Endothelial cell of umbilical vein (primary cell): ENCODE measurements at regions of chr1 and their contacts with region 1.

Region 1: GRCh38 chr1:218705911-218706893 is 361.1 kb downstream of the TGFB2 start:
- DNase-seq: peak; percentile 74
- H3K4me3 ChIP-seq: no peak overlapping the region
- H3K27ac ChIP-seq: peak overlapping the region; percentile 86
- H3K4me1 ChIP-seq: peaks cover 26% of the 10 kb centered on the region
- H3K27me3 ChIP-seq: no peaks in the 10 kb centered on the region
- CTCF ChIP-seq: no peak
- POLR2A ChIP-seq: no peak

Region 2: GRCh38 chr1:218473522-218473921 is 232.7 kb before region 1 on chr1:
- CTCF ChIA-PET with region 1: no interaction called
- POLR2A ChIA-PET with region 1: no interaction called
- dilution Hi-C with region 1: no loop called
- intact Hi-C with region 1: no loop called
- DNase-seq: peak; percentile 79
- H3K4me3 ChIP-seq: no peak overlapping the region
- H3K27ac ChIP-seq: peak overlapping the region; percentile 74
- H3K4me1 ChIP-seq: peaks cover 28% of the 10 kb centered on the region
- H3K27me3 ChIP-seq: no peaks in the 10 kb centered on the region
- CTCF ChIP-seq: no peak
- POLR2A ChIP-seq: peak; percentile 46

Region 3: DNA sequence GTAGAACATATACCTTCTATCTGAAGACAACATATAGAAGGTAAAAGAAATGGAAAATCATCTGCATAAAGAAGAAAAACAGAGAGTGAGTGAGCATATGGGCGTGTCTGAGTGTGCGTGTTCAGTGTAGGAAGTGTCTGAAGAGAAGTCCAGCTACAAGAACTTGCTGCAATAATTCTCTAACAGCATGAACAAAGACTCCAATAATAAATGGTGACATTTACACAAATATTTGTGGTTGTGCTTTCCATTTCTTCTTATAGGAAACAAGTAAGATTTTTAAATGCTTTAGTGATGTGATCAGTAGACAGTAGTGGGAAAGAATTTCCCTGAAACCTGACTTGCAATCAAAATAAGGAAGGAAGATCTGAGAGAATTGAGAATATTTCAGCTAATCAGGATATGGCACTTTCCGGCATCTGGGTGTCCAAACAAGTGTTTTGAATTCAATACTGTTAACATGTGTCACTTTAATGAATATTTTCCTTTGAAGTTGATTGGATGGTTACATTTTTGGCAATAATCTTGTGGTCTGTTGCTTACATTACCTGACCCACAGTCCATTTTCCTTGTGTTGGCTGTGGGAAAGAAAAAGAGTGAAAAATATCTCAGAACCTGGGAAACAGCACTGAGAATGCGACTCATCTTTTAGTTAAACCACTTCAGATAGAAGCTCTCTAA is 207.1 kb before region 1 on chr1:
- CTCF ChIA-PET with region 1: no interaction called
- POLR2A ChIA-PET with region 1: no interaction called
- dilution Hi-C with region 1: no loop called
- intact Hi-C with region 1: loop called (anchors 2 kb)
- DNase-seq: peak; percentile 83
- H3K4me3 ChIP-seq: peak overlapping the region in 1 of 3 experiments; percentile 60
- H3K27ac ChIP-seq: peak overlapping the region; percentile 93
- H3K4me1 ChIP-seq: peaks cover 29% of the 10 kb centered on the region
- H3K27me3 ChIP-seq: no peaks in the 10 kb centered on the region
- CTCF ChIP-seq: no peak
- POLR2A ChIP-seq: no peak

Region 4: DNA sequence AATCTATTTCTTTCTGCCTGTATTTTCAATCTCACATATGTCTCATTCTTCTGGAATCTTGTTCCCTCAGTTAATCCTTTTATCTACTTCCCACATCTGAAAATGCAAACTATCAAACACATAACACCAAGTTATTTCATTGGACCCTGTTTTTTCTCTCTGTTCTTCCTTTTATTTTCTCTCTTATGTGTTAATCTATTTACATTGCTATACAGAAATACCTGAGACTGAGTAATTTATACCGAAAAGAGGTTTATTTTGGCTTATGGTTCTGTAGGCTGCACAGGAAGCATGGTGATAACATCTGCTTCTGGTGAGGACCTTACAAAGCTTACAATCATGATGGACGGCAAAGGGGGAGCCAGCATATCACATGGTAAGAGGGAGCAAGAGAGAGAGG is 113.5 kb before region 1 on chr1:
- CTCF ChIA-PET with region 1: no interaction called
- POLR2A ChIA-PET with region 1: no interaction called
- dilution Hi-C with region 1: no loop called
- intact Hi-C with region 1: loop called (anchors 1 kb)
- DNase-seq: peak; percentile 94
- H3K4me3 ChIP-seq: peak overlapping the region in 1 of 3 experiments; percentile 7
- H3K27ac ChIP-seq: peak overlapping the region; percentile 68
- H3K4me1 ChIP-seq: peaks cover 19% of the 10 kb centered on the region
- H3K27me3 ChIP-seq: no peaks in the 10 kb centered on the region
- CTCF ChIP-seq: no peak
- POLR2A ChIP-seq: peak; percentile 42

Region 5: GRCh38 chr1:218674280-218674773 is 31.9 kb before region 1 on chr1:
- CTCF ChIA-PET with region 1: no interaction called
- POLR2A ChIA-PET with region 1: no interaction called
- dilution Hi-C with region 1: no loop called
- intact Hi-C with region 1: loop called (anchors 1 kb)
- DNase-seq: peak; percentile 69
- H3K4me3 ChIP-seq: no peak overlapping the region
- H3K27ac ChIP-seq: peak overlapping the region; percentile 23
- H3K4me1 ChIP-seq: peaks cover 7% of the 10 kb centered on the region
- H3K27me3 ChIP-seq: no peaks in the 10 kb centered on the region
- CTCF ChIP-seq: peak in 1 of 2 donors; percentile 33
- POLR2A ChIP-seq: peak; percentile 23

Region 6: GRCh38 chr1:218829099-218829498 is 122.9 kb after region 1 on chr1:
- CTCF ChIA-PET with region 1: no interaction called
- POLR2A ChIA-PET with region 1: no interaction called
- dilution Hi-C with region 1: no loop called
- intact Hi-C with region 1: no loop called
- DNase-seq: no peak
- H3K4me3 ChIP-seq: no peak overlapping the region
- H3K27ac ChIP-seq: no peak overlapping the region
- H3K4me1 ChIP-seq: no peaks in the 10 kb centered on the region
- H3K27me3 ChIP-seq: no peaks in the 10 kb centered on the region
- CTCF ChIP-seq: no peak
- POLR2A ChIP-seq: no peak

Region 7: GRCh38 chr1:219271818-219272535 is 565.8 kb after region 1 on chr1:
- CTCF ChIA-PET with region 1: no interaction called
- POLR2A ChIA-PET with region 1: no interaction called
- dilution Hi-C with region 1: no loop called
- intact Hi-C with region 1: loop called (anchors 10 kb)
- DNase-seq: no peak
- H3K4me3 ChIP-seq: no peak overlapping the region
- H3K27ac ChIP-seq: peak overlapping the region; percentile 38
- H3K4me1 ChIP-seq: peaks cover 10% of the 10 kb centered on the region
- H3K27me3 ChIP-seq: no peaks in the 10 kb centered on the region
- CTCF ChIP-seq: no peak
- POLR2A ChIP-seq: no peak